ENCODE measurements at regions of chr5 and their contacts with region 1.

Region 1: DNA sequence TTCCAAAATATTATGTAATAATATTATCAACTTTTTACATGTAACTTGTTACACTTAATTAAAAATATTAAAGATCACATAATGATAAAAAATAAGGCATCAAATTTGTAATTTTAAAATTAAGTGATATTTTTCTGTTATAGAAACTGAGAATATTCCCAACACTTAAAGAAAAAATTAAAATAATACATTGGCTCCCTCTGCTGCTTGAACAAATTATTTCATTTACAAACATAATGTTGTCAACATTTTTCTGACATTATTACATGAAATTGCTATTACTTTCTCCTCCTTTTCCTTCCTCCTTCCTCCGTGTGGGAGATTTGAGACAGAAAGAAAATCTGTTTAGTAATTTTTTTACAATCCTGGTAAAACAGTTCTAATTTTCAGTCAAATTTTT is 42.3 kb downstream of the RNF180 start:
- DNase-seq: no peak
- H3K4me3 ChIP-seq: no peak overlapping the region
- H3K27ac ChIP-seq: no peak overlapping the region
- H3K4me1 ChIP-seq: no peaks in the 10 kb centered on the region
- H3K27me3 ChIP-seq: no peaks in the 10 kb centered on the region
- CTCF ChIP-seq: peak; percentile 28 to 35 (median 32)
- POLR2A ChIP-seq: no peak

Region 2: DNA sequence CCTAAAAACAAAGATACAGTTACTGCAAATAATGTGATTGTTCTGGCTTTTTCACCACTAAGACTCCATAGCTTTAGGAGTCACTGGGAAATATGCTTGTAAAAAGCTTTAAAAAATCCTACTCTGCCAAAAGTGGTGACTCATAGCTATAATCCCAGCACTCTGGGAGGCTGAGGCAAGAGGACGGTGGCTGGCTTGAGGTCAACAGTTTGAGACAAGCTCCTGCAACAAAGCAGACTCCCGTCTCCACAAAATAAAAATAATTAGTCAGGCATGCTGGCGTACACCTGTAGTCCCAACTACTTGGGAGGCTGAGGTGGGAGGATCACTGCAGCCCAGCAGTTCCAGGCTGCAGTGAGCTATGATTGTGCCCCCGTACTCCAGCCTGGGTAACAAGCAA is 652.1 kb before region 1 on chr5:
- intact Hi-C with region 1: no loop called
- DNase-seq: no peak
- H3K4me3 ChIP-seq: no peak overlapping the region
- H3K27ac ChIP-seq: no peak overlapping the region
- H3K4me1 ChIP-seq: no peaks in the 10 kb centered on the region
- H3K27me3 ChIP-seq: no peaks in the 10 kb centered on the region
- CTCF ChIP-seq: no peak
- POLR2A ChIP-seq: no peak

Region 3: DNA sequence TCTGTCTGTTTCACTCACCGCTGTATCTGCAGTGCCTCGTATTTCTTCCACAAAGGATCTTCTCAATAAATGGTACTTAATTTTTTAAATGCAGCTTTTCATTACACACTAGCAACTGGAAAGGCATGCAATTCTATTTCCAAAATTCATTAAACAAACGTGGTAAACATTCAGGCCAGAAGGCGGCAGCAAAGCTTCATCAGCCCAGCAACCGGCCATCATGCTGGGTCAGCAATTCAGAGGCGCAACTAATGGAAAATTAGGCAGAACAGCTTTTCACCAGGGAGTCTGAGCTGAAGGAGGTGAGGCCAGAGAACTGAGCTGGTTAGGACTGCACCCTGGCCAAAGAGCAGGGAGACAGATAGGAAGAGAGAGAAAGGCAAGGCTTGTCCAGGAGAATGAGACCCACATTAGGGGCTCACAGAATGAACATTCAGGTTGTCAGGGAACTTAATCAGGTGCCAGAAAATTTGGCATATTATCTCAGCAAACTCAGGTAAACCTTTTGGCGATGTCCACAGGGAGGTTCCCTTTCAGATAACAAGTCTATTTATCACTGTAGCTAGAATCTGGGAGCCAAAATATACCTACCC is 60.0 kb before region 1 on chr5:
- intact Hi-C with region 1: loop called (anchors 5 kb)
- DNase-seq: peak; percentile 65 to 68
- H3K4me3 ChIP-seq: no peak overlapping the region
- H3K27ac ChIP-seq: no peak overlapping the region
- H3K4me1 ChIP-seq: no peaks in the 10 kb centered on the region
- H3K27me3 ChIP-seq: no peaks in the 10 kb centered on the region
- CTCF ChIP-seq: peak; percentile 71 to 83 (median 80)
- POLR2A ChIP-seq: no peak